ENCODE measurements at regions of chr4 and their contacts with region 1.

Region 1: GRCh38 chr4:176340871-176341685 is 21.3 kb downstream of the SPCS3 start:
- DNase-seq: no peak
- ATAC-seq: peak; percentile 76
- H3K4me3 ChIP-seq: no peak overlapping the region
- H3K27ac ChIP-seq: no peak overlapping the region
- H3K4me1 ChIP-seq: no peaks in the 10 kb centered on the region
- H3K27me3 ChIP-seq: no peaks in the 10 kb centered on the region
- CTCF ChIP-seq: peak; percentile 50 to 74 (median 55); a peak in 5 of 6 replicates
- EP300 ChIP-seq: no peak
- POLR2A ChIP-seq: no peak
- RAD21 ChIP-seq: peak; percentile 86

Region 2: DNA sequence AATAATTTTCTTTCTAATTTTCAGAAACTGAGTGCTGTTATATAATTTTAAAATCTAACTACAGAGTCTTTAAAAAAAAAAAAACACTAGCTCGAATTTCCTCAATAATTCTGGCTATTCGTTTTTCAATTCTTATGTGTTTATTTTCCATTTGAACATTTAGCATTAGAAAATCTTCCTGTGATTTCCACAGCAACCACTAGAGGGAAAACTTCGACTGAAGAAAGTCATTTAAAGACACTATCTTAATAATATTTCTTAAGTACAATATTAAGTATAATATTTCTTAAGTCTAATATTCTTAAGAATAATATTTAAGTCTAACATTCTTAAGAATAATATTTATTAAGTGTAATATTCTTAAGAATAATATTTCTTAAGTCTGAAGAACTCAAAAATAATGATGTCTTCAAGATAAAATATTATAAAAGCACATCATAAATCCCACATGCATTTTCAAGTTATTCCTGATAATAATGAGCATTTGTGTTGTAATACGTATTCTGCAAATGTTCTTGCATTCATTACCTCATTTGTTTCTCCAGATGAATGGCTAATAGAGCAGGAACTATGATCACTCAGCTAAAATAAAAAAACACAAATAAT is 393.9 kb before region 1 on chr4:
- CTCF ChIA-PET with region 1: interaction called, 14 read pairs
- POLR2A ChIA-PET with region 1: no interaction called
- RAD21 ChIA-PET with region 1: interaction called, 16 read pairs
- SMC1A ChIA-PET with region 1: interaction called, 10 read pairs
- in situ Hi-C with region 1: loop called (anchors 10 kb)
- intact Hi-C with region 1: loop called (anchors 1 kb)
- DNase-seq: no peak
- ATAC-seq: 0 out of 3 replicates have a peak, but pooled peaks have one; percentile 38
- H3K4me3 ChIP-seq: no peak overlapping the region
- H3K27ac ChIP-seq: no peak overlapping the region
- H3K4me1 ChIP-seq: no peaks in the 10 kb centered on the region
- H3K27me3 ChIP-seq: peaks cover 0 to 3% of the 10 kb centered on the region in 2 experiments; a peak in 1 of 4 replicates
- CTCF ChIP-seq: peak in 2 of 3 experiments; percentile 43 to 47; a peak in 3 of 6 replicates
- EP300 ChIP-seq: no peak
- POLR2A ChIP-seq: no peak
- RAD21 ChIP-seq: peak; percentile 69

Region 3: DNA sequence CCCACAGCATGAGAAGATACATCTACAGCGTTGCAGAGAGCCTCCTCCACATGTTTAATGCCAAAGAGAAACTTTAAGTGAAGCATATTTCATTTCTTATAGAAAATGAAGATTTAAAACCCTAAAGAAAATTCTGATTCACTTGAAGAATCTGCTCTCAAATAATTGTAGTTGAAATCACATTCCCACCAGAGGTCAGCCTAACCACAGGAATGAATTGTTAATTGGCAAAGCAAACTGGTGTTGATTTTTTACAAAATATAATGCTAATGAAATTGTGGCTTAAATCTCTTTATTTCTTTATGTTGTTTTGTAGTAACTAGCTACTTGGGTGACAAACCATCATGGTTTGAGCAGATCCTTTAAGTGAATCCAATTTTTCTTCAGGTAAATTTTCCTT is 306.6 kb before region 1 on chr4:
- CTCF ChIA-PET with region 1: interaction called, 10 read pairs
- POLR2A ChIA-PET with region 1: no interaction called
- RAD21 ChIA-PET with region 1: interaction called, 9 read pairs
- SMC1A ChIA-PET with region 1: interaction called, 15 read pairs
- in situ Hi-C with region 1: loop called (anchors 25 kb)
- intact Hi-C with region 1: loop called (anchors 1 kb)
- DNase-seq: no peak
- ATAC-seq: no peak
- H3K4me3 ChIP-seq: no peak overlapping the region
- H3K27ac ChIP-seq: no peak overlapping the region
- H3K4me1 ChIP-seq: peaks cover 7% of the 10 kb centered on the region
- H3K27me3 ChIP-seq: no peaks in the 10 kb centered on the region
- CTCF ChIP-seq: peak in 2 of 3 experiments; percentile 17 to 43; a peak in 1 of 6 replicates
- EP300 ChIP-seq: no peak
- POLR2A ChIP-seq: no peak
- RAD21 ChIP-seq: peak; percentile 76

Region 4: GRCh38 chr4:176099314-176099713 is 241.8 kb before region 1 on chr4:
- CTCF ChIA-PET with region 1: no interaction called
- POLR2A ChIA-PET with region 1: no interaction called
- RAD21 ChIA-PET with region 1: no interaction called
- SMC1A ChIA-PET with region 1: no interaction called
- in situ Hi-C with region 1: no loop called
- intact Hi-C with region 1: no loop called
- DNase-seq: no peak
- ATAC-seq: no peak
- H3K4me3 ChIP-seq: no peak overlapping the region
- H3K27ac ChIP-seq: no peak overlapping the region
- H3K4me1 ChIP-seq: no peaks in the 10 kb centered on the region
- H3K27me3 ChIP-seq: no peaks in the 10 kb centered on the region
- CTCF ChIP-seq: no peak
- EP300 ChIP-seq: no peak
- POLR2A ChIP-seq: no peak
- RAD21 ChIP-seq: no peak

Region 5: GRCh38 chr4:176150356-176150682 is 190.8 kb before region 1 on chr4:
- CTCF ChIA-PET with region 1: interaction called, 18 read pairs
- POLR2A ChIA-PET with region 1: no interaction called
- RAD21 ChIA-PET with region 1: interaction called, 13 read pairs
- SMC1A ChIA-PET with region 1: interaction called, 4 read pairs
- in situ Hi-C with region 1: no loop called
- intact Hi-C with region 1: loop called (anchors 1 kb)
- DNase-seq: no peak
- ATAC-seq: no peak
- H3K4me3 ChIP-seq: no peak overlapping the region
- H3K27ac ChIP-seq: no peak overlapping the region
- H3K4me1 ChIP-seq: no peaks in the 10 kb centered on the region
- H3K27me3 ChIP-seq: no peaks in the 10 kb centered on the region
- CTCF ChIP-seq: peak in 1 of 3 experiments; percentile 30; a peak in 1 of 6 replicates
- EP300 ChIP-seq: no peak
- POLR2A ChIP-seq: no peak
- RAD21 ChIP-seq: peak; percentile 56